ENCODE measurements at regions of chr6 and their contacts with region 1.

Region 1: DNA sequence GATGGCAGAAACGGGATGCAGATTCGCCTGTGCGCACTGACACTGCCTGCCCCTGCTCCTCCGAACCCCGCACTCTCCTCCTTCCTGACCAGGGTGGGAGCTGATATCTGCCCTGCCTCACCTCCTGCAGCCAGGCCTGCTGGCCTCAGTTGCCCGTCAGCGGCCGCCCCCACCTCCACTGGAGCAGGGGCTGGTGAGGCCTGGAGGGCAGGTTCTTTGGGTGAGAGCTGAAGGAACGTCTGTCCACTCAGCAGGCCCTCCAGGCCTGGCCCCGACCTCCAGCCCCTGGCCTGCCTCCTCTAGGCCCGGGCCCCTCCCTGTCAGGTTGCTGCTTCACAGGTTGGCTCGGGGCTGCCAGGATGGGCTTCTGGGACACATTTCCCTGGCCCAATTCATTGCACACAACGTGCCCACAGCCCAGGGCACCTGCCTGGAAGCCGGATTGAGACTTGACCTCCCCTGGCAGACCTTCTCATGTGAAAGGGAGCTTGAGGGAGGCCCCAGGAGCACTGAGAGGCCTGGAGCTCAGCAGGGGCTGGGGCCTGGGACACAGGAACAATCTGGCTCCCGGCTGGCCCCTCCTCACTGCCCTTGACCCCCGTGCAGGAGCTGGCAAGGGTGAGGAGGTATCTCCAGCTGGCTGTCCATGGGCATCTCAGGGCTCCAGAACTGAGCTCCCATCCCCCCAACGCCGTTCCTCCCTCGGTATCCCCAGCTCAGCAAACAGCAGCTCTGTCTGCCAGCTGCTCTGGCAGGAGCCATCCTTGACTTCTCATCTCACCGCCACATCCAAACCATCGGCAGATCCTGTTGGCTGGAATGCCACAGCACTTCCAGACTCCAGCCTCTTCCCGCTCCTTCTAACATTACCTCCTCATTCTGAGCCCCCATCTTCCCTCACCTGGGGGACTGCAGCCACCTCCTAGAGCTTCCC is 39.5 kb downstream of the SPDEF start:
- DNase-seq: no peak
- ATAC-seq: no peak
- H3K4me3 ChIP-seq: no peak overlapping the region
- H3K27ac ChIP-seq: no peak overlapping the region
- H3K4me1 ChIP-seq: peaks cover 0 to 7% (median 0%) of the 10 kb centered on the region in 9 donors
- H3K27me3 ChIP-seq: peaks cover 0 to 32% (median 19%) of the 10 kb centered on the region in 7 donors
- CTCF ChIP-seq: no peak

Region 2: GRCh38 chr6:34478796-34479195 is 37.9 kb before region 1 on chr6:
- intact Hi-C with region 1: loop called in 1 of 10 experiments (anchors 1 kb)
- DNase-seq: no peak
- ATAC-seq: no peak
- H3K4me3 ChIP-seq: no peak overlapping the region
- H3K27ac ChIP-seq: no peak overlapping the region
- H3K4me1 ChIP-seq: no peaks in the 10 kb centered on the region
- H3K27me3 ChIP-seq: no peaks in the 10 kb centered on the region
- CTCF ChIP-seq: no peak